ENCODE measurements at regions of chr3 and their contacts with region 1.

Region 1: DNA sequence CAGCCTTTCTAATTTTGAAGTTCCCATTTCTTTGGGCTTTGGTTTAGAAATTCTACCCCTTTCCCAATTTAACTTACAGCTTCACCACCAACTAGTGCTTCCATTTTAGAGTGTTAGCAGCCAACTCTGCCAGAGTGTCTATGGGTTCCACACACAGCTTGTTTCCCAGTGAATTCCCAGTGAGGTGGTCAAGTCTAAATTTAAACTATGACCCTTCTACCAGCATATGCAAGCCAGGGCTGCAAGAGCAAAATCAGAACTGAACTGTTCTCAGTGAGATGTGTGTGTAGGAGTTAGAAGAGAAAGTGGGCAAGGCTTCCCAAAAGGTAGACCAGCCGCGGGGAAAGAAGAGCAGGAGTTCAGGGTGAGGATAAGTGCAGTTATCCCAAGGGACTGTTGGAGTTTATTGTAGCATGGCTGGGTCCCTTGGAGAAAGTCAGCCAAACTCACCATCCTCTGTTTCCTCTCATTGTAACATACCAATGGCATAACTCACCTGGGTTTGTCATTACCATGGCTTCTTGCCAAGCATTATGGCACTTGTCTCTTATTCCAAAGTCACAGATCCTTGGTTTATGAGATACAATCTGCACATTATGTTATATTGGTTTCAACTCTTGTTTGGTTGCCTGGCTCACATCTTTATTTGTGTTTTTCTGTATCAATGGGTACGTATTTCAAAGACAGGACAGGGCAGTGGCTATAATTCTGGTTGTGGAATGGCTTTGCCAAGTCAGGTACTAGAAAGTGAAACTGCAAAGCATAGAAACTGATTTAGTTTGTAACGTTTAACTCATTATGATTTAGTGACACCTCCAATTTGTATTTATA is 130.3 kb upstream of the UMPS start:
- DNase-seq: peak; percentile 99
- ATAC-seq: peak; percentile 90
- H3K4me3 ChIP-seq: 0 out of 2 replicates have a peak overlapping the region, but pooled peaks have one; percentile 4
- H3K27ac ChIP-seq: peak overlapping the region; percentile 84
- H3K4me1 ChIP-seq: peaks cover 34% of the 10 kb centered on the region
- H3K27me3 ChIP-seq: no peaks in the 10 kb centered on the region
- CTCF ChIP-seq: no peak

Region 2: DNA sequence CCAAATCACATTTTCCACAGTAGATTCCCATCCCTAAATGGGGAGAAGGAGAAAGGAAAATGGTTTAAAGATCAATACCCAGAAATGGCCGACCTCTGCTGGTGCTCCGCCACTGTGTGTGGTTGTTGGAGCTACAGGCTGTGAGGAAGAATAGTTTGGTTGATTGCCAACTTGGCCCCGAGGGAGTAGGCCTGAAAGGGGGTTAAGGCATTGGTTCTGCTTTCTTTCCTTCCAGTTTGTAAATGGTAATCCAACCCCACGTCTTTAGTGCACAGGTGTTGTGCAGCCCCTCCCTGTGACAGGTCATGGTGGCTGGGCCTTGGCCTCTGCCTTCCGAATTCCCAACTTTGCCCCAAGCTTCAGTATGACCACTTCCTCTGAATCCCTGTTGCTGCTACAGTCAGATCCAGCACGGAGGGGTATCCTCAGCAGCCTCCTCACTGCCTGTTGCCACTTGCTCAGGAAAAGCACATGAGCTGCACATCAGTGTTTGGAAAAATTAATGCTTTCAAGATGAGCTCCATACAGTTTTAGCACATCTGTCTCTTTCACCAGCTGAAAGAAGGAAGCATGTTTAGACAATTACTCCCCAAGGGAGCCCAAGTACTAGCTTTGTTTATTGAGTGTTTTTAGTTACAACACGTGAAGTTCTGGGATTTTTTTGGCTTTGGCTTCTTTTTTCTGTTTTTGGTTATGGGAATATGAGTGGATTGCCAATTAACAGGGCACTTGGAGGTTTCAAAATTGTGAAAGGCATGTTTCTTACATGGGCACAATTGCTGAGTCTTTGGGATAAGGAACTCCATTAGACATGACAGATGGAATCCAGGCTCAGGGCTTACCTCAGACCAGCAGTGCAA is 515.7 kb before region 1 on chr3:
- CTCF ChIA-PET with region 1: no interaction called
- POLR2A ChIA-PET with region 1: no interaction called
- intact Hi-C with region 1: no loop called
- DNase-seq: no peak
- ATAC-seq: no peak
- H3K4me3 ChIP-seq: no peak overlapping the region
- H3K27ac ChIP-seq: no peak overlapping the region
- H3K4me1 ChIP-seq: no peaks in the 10 kb centered on the region
- H3K27me3 ChIP-seq: peaks cover 5% of the 10 kb centered on the region; the same call in 1 of the 2 replicates
- CTCF ChIP-seq: no peak

Region 3: GRCh38 chr3:124669470-124669869 is 69.5 kb after region 1 on chr3:
- CTCF ChIA-PET with region 1: no interaction called
- POLR2A ChIA-PET with region 1: no interaction called
- intact Hi-C with region 1: loop called (anchors 10 kb)
- DNase-seq: peak; percentile 81
- ATAC-seq: peak; percentile 100
- H3K4me3 ChIP-seq: no peak overlapping the region
- H3K27ac ChIP-seq: peak overlapping the region; percentile 34
- H3K4me1 ChIP-seq: peaks cover 13% of the 10 kb centered on the region
- H3K27me3 ChIP-seq: no peaks in the 10 kb centered on the region
- CTCF ChIP-seq: no peak